Heart left ventricle (tissue), 16 donors: ENCODE measurements at regions of chr10 and their contacts with region 1.

Region 1: GRCh38 chr10:15579605-15580004 is 140.1 kb downstream of the ITGA8 start:
- DNase-seq: no peak
- ATAC-seq: no peak
- H3K4me3 ChIP-seq: no peak overlapping the region
- H3K27ac ChIP-seq: no peak overlapping the region
- H3K4me1 ChIP-seq: no peaks in the 10 kb centered on the region
- H3K27me3 ChIP-seq: no peaks in the 10 kb centered on the region
- CTCF ChIP-seq: no peak
- POLR2A ChIP-seq: no peak

Region 2: DNA sequence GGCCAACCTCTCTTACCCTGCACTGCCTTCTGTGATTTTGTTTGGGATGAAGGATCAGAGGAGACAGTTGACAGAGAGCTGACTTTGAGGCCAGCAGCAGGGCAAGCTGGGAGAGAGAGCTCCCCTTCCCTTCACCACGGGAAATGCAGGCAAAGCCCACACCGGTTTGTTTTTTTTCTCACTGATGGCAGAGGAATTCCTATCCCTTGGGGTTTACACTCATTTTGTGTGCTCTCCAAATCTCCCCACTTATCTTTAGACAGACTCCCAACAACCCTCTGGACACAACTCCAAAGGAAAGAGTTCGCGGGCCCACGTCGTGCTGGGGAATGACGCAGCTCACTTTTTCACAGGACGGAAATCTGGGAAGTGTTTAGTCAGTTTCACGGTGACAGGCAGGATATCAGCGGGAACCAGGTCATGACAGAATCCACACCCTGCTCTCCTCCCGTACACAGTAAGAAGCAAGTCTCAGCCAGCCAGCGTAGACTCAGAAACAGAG is 140.2 kb before region 1 on chr10:
- intact Hi-C with region 1: loop called in 3 of 10 experiments (anchors 5 to 10 kb)
- DNase-seq: peak; percentile 53 to 71 (median 59)
- ATAC-seq: peak; percentile 75 to 97 (median 92)
- H3K4me3 ChIP-seq: peak overlapping the region in 10 of 12 donors; percentile 21 to 51 (median 36)
- H3K27ac ChIP-seq: peak overlapping the region; percentile 26 to 80 (median 60)
- H3K4me1 ChIP-seq: peaks cover 0 to 16% (median 6%) of the 10 kb centered on the region in 12 donors
- H3K27me3 ChIP-seq: no peaks in the 10 kb centered on the region
- CTCF ChIP-seq: peak in 9 of 12 donors; percentile 7 to 60 (median 38)
- POLR2A ChIP-seq: peak in 1 of 2 donors; percentile 18

Region 3: DNA sequence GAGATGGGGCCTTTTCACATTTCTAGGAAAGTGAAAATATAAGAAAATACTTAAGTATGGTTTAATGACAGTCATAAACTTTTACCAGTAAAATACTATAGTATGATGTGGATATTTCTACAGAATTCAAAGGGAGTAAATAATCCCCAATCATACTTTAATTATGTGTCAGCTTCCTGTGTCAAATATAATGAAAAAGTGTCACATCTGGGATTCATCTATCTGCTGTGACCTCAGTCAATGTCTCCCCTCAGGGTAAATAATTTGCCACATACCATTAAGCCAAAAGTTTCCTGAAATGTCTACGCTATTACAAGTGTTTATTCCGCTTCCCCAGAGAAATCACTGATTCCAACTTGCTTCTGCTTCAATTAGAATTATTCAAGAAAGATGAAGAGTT is 29.6 kb after region 1 on chr10:
- intact Hi-C with region 1: no loop called
- DNase-seq: no peak
- ATAC-seq: no peak
- H3K4me3 ChIP-seq: no peak overlapping the region
- H3K27ac ChIP-seq: no peak overlapping the region
- H3K4me1 ChIP-seq: no peaks in the 10 kb centered on the region
- H3K27me3 ChIP-seq: no peaks in the 10 kb centered on the region
- CTCF ChIP-seq: no peak
- POLR2A ChIP-seq: no peak